ENCODE measurements at regions of chr6 and their contacts with region 1.

Region 1: DNA sequence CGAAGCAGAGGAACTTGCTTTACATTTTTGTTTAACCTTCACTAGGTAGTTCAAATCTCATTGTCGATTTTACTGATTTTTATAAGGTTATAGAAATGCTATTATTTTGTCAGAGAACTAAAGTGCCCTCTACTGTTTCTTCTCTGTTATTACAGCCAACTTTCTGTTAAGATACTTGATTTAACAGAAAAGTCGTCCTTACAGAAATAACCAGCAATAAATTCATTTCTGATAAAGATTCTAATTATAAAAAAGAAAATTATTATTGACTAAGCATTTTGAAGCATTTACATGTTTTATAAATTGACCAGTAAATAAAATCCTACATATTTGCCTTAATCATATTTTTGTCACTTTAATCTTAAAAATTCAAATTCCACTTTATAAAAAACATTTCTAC is 60.8 kb downstream of the OGFRL1 start:
- DNase-seq: no peak
- ATAC-seq: no peak
- H3K4me3 Mint-ChIP-seq: no peak overlapping the region
- H3K27ac Mint-ChIP-seq: no peak overlapping the region
- H3K4me1 Mint-ChIP-seq: peaks cover 19% of the 10 kb centered on the region
- H3K27me3 Mint-ChIP-seq: peaks cover under 1% of the 10 kb centered on the region
- CTCF ChIP-seq: peak; percentile 54

Region 2: DNA sequence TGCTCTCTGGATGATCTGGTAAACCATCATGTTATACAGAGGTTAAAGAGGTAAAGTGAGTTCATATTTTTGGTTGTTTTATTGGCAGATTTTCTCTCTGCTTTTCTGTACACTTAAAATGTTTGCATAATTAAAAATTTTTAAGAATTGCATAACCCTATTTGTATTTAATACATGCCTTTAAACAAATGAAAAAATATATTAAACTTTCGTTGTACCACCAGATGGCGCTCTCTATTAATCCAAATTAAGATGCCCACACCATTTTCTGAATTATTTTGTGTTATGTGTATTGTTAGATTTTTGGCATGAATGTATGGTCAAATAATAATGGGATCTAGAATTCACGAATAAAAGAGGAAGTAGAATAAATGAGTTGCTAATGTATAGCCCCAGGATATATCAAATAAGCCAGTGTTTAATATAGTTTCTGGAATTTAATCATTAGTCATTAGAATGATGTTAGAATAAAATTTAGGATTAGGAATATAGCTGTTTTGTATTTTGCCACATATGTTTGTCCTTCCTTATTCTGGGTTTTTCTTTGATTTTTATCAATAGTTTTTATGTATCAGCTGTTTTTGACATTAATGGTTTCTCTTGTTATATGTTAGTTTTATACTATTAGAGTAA is 642.8 kb before region 1 on chr6:
- CTCF ChIA-PET with region 1: no interaction called
- POLR2A ChIA-PET with region 1: no interaction called
- intact Hi-C with region 1: loop called (anchors 1 kb)
- DNase-seq: no peak
- ATAC-seq: no peak
- H3K4me3 Mint-ChIP-seq: no peak overlapping the region
- H3K27ac Mint-ChIP-seq: no peak overlapping the region
- H3K4me1 Mint-ChIP-seq: peaks cover 21% of the 10 kb centered on the region
- H3K27me3 Mint-ChIP-seq: no peaks in the 10 kb centered on the region
- CTCF ChIP-seq: peak; percentile 69

Region 3: GRCh38 chr6:71248306-71248765 is 101.1 kb before region 1 on chr6:
- CTCF ChIA-PET with region 1: no interaction called
- POLR2A ChIA-PET with region 1: no interaction called
- intact Hi-C with region 1: no loop called
- DNase-seq: no peak
- ATAC-seq: peak; percentile 79
- H3K4me3 Mint-ChIP-seq: peak overlapping the region; percentile 8
- H3K27ac Mint-ChIP-seq: peak overlapping the region; percentile 80
- H3K4me1 Mint-ChIP-seq: peaks cover 51% of the 10 kb centered on the region
- H3K27me3 Mint-ChIP-seq: no peaks in the 10 kb centered on the region
- CTCF ChIP-seq: no peak

Measured in activated B cell treated with CpG ODN at 0.5 μM for 24 hours (primary cell).